Mammary epithelial cell (primary cell): ENCODE measurements at regions of chr14 and their contacts with region 1.

Region 1: GRCh38 chr14:94129111-94129757 is at the start of gene IFI27L2:
- DNase-seq: peak; percentile 87
- H3K4me3 ChIP-seq: peak within 1 kb of the TSS; percentile 52 to 62 (median 57)
- H3K27ac ChIP-seq: no peak within 1 kb of the TSS
- H3K4me1 ChIP-seq: peaks cover 7% of the 10 kb centered on the region
- H3K27me3 ChIP-seq: no peaks in the 10 kb centered on the region
- CTCF ChIP-seq: peak in 1 of 2 donors; percentile 43
- total RNA-seq, gene IFI27L2: 68.0 to 122 TPM

Region 2: DNA sequence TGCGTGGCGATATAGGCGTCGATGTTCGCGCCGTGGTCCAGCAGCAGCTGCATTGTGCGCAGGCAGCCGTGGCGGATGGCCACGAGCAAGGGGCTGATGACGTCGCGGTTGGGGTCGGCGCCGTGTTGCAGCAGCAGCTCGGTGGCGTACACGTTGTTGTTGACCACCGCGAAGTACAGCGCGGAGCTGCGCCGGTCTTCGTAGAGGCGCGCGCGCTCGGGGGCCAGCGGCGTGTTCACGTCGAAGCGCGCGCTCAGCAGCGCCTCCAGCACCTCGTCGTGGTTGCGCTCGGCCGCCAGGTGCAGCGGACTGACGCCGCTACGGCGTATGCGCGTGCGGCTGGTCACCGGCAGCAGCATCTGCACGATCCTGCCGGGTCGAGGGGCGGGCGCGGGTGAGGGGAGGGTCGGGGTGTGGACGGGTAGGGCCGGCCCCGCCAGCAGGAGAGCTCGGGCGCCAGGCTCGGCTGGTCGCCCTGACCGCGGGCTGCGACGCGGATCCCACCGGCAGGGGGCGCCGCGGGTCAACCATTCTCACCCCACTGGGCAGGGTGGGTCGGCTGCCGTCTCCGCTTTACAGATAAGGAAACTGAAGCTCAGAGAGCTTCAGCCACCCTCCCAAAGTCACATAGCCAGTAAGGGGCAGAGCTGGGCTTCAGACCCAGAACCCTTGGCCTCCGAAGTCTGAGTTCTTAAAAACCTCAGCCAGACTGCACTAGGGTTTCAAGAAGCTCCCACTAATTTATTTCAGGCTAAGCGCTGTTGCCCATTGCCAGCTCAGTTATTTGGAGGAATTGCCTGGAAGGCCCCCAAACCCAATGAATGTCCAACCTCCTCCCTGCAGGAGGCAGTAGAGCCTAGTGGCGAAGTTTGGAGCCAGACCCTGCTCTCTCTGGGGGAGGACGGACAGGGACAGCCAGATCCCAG is 189.7 kb before region 1 on chr14:
- CTCF ChIA-PET with region 1: no interaction called
- dilution Hi-C with region 1: no loop called
- in situ Hi-C with region 1: no loop called
- intact Hi-C with region 1: no loop called
- DNase-seq: peak; percentile 71
- H3K4me3 ChIP-seq: peak overlapping the region in 1 of 3 experiments; percentile 16
- H3K27ac ChIP-seq: no peak overlapping the region
- H3K4me1 ChIP-seq: peaks cover 54% of the 10 kb centered on the region
- H3K27me3 ChIP-seq: no peaks in the 10 kb centered on the region
- CTCF ChIP-seq: peak; percentile 28 to 52

Region 3: DNA sequence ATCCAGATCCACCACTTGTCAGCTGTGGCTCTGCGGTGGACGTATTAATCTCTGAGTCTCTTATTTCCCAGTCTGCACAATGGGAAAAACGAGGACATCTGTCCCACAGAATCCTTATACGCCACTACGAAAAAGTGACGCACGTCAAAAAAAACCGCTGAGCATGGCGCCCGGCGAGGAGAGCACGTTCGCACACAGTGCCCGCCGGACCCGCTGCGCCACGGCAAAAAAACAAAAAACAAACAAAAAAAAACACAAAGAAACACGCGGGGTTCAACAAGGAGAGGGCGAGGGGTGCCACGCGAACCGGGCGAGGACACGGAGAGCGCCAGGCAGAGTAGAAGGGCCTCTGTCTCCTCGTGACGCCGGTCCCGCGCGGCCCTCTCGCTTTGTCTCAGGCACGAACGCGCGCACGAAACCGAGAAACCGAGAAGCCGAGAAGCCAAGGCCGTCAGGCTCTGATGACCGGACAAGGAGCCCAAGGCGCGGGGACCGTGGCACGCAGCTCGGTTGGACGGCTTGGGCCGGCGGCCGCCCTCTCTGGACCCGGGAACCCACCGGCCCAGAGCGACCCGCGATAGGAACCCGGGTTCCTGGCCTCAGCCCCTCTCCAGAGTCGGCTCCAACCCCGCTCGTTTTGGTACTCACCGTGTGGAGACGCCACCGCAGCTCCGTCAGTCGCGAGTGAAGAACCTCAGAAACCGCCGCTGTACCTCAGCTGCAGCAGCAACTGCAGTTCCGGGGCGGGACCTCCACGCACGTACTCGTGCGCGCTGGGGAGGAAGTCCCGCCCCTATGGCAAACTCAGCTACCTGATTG is 48.6 kb before region 1 on chr14 and contains the start of gene DDX24:
- CTCF ChIA-PET with region 1: interaction called, 4 read pairs
- dilution Hi-C with region 1: no loop called
- in situ Hi-C with region 1: no loop called
- intact Hi-C with region 1: loop called (anchors 1 kb)
- DNase-seq: peak; percentile 95
- H3K4me3 ChIP-seq: peak within 1 kb of the TSS; percentile 93 to 99 (median 96)
- H3K27ac ChIP-seq: peak within 1 kb of the TSS; percentile 95
- H3K4me1 ChIP-seq: peaks cover 18% of the 10 kb centered on the region
- H3K27me3 ChIP-seq: no peaks in the 10 kb centered on the region
- CTCF ChIP-seq: no peak
- total RNA-seq, gene DDX24: 94.7 to 156 TPM

Region 4: DNA sequence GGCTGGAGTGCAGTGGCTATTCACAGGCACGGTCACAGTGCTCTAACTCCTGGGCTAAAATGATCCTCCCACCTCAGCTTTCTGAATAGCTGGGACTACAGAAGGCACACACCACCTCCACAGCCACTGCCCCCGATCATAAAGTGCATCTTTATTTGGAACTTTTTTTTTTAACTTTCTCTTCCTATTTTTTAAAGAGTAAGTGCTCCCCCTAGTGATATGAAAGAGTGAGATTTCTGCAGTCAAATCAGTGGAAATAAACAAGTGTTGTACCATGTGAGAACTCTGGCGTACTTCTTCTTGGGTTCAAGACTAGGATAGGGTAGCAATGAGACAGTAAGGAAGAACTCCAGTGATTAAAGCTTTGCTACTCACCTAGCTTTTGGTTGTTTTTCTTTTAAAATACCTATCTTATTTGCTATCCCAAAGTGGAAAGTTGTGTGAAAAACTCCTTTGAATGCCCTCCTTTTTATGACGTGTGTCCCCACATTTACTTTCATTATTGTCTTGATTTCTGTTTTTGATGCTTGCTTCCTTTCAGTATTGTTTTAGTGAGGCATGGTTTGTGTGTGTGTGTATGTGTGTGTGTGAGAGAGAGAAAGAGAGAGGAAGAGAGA is 51.5 kb after region 1 on chr14:
- CTCF ChIA-PET with region 1: no interaction called
- dilution Hi-C with region 1: no loop called
- in situ Hi-C with region 1: no loop called
- intact Hi-C with region 1: loop called (anchors 1 kb)
- DNase-seq: peak; percentile 60
- H3K4me3 ChIP-seq: peak overlapping the region in 2 of 3 experiments; percentile 37 to 45
- H3K27ac ChIP-seq: peak overlapping the region; percentile 61
- H3K4me1 ChIP-seq: peaks cover 23% of the 10 kb centered on the region
- H3K27me3 ChIP-seq: no peaks in the 10 kb centered on the region
- CTCF ChIP-seq: peak; percentile 58 to 63

Region 5: GRCh38 chr14:94292872-94293577 is 163.8 kb after region 1 on chr14 and contains the start of gene SERPINA10:
- CTCF ChIA-PET with region 1: no interaction called
- dilution Hi-C with region 1: no loop called
- in situ Hi-C with region 1: no loop called
- intact Hi-C with region 1: no loop called
- DNase-seq: no peak
- H3K4me3 ChIP-seq: no peak within 1 kb of the TSS
- H3K27ac ChIP-seq: no peak within 1 kb of the TSS
- H3K4me1 ChIP-seq: no peaks in the 10 kb centered on the region
- H3K27me3 ChIP-seq: no peaks in the 10 kb centered on the region
- CTCF ChIP-seq: no peak
- total RNA-seq, gene SERPINA10: not detected

Region 6: DNA sequence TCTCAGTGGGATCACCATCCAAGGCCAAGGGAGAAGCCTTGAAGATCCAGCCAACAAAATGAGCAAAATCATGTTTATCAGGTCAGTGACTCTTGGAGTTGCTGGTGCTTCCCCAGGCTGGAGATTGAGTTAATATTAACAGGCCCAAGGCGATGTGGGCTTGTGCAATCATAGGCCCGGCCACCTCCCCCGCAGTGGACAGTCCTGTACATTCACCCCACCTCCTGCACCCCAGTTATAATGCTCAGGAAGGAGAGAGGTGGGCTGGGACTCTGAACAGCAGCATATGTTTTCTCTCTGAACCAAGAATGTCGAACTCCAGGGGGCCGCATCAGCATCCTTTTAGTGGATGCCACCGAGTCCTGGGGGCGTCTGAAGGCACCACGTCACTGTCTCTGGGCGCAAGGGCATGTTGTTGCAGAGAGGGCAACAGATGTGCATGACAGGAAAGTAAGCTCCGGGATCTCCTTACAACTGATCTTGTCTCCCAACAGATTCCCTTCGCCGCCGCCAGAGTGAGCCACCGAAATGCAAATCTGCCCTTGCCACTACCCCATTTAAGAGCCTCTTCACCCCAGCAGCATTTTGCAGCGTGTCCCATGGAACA is 226.1 kb after region 1 on chr14:
- CTCF ChIA-PET with region 1: no interaction called
- dilution Hi-C with region 1: no loop called
- in situ Hi-C with region 1: no loop called
- intact Hi-C with region 1: loop called (anchors 5 kb)
- DNase-seq: peak; percentile 66
- H3K4me3 ChIP-seq: no peak overlapping the region
- H3K27ac ChIP-seq: no peak overlapping the region
- H3K4me1 ChIP-seq: peaks cover 12% of the 10 kb centered on the region
- H3K27me3 ChIP-seq: no peaks in the 10 kb centered on the region
- CTCF ChIP-seq: peak; percentile 47 to 79

Region 7: DNA sequence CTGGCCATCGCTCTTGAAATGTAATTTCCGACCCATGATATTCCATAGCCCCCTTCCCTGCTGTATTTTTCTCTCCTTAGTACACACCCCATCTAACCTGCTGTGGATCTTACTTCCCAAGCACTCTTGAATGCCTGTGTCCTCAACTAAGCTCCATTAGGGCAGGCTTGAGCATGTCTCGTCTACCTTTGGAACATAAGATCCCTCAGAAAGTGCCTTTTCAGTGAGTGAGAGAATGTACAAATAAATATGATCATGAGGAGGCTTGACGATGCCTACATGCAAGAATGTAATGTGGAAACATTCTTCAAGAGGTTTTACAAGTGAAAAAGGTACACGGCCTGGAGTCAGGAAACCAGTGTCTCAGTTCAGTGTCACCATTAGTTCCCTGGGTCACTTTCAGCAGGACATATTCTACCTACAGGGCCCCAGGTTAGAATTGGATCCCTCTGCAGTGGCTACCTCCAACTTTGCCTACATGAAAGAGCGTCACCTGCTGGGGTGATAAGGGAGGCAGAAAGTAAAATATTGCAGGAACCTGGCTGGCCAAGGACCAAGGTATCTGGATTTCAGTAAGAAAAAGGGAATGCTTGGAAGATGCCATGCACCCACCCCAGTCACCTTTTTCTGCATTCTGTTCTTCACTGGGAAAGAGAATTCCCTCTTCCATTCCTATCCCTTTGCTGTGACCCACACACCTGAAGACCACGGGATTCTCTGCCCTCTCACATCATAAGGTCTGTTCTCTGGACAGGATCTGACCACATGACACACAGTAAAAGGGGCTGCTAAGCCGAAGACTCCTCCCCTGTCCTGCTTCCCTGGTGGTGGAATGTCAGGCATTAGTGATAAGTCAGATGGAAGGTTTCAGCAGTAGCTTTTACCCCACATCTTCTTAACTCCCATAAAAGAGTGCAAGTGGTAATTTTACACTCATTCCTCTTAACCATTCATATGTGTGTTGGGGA is 283.7 kb after region 1 on chr14:
- CTCF ChIA-PET with region 1: interaction called, 3 read pairs
- dilution Hi-C with region 1: no loop called
- in situ Hi-C with region 1: no loop called
- intact Hi-C with region 1: loop called (anchors 1 kb)
- DNase-seq: peak; percentile 51
- H3K4me3 ChIP-seq: no peak overlapping the region
- H3K27ac ChIP-seq: no peak overlapping the region
- H3K4me1 ChIP-seq: peaks cover 18% of the 10 kb centered on the region
- H3K27me3 ChIP-seq: no peaks in the 10 kb centered on the region
- CTCF ChIP-seq: peak; percentile 50 to 82

Region 8: GRCh38 chr14:94423453-94424056 is 294.3 kb after region 1 on chr14:
- CTCF ChIA-PET with region 1: no interaction called
- dilution Hi-C with region 1: no loop called
- in situ Hi-C with region 1: no loop called
- intact Hi-C with region 1: no loop called
- DNase-seq: peak; percentile 37
- H3K4me3 ChIP-seq: no peak overlapping the region
- H3K27ac ChIP-seq: no peak overlapping the region
- H3K4me1 ChIP-seq: peaks cover 15% of the 10 kb centered on the region
- H3K27me3 ChIP-seq: no peaks in the 10 kb centered on the region
- CTCF ChIP-seq: peak; percentile 71 to 78

Region 9: GRCh38 chr14:94548999-94549985 is 420.1 kb after region 1 on chr14:
- CTCF ChIA-PET with region 1: no interaction called
- dilution Hi-C with region 1: no loop called
- in situ Hi-C with region 1: no loop called
- intact Hi-C with region 1: loop called (anchors 1 kb)
- DNase-seq: peak; percentile 21
- H3K4me3 ChIP-seq: no peak overlapping the region
- H3K27ac ChIP-seq: no peak overlapping the region
- H3K4me1 ChIP-seq: no peaks in the 10 kb centered on the region
- H3K27me3 ChIP-seq: no peaks in the 10 kb centered on the region
- CTCF ChIP-seq: peak; percentile 81 to 84

Region 10: GRCh38 chr14:94593749-94594431 is 464.7 kb after region 1 on chr14:
- CTCF ChIA-PET with region 1: no interaction called
- dilution Hi-C with region 1: no loop called
- in situ Hi-C with region 1: no loop called
- intact Hi-C with region 1: no loop called
- DNase-seq: no peak
- H3K4me3 ChIP-seq: no peak overlapping the region
- H3K27ac ChIP-seq: no peak overlapping the region
- H3K4me1 ChIP-seq: peaks cover 12% of the 10 kb centered on the region
- H3K27me3 ChIP-seq: no peaks in the 10 kb centered on the region
- CTCF ChIP-seq: no peak